Testis (tissue), 5 donors: ENCODE measurements at regions of chr11 and their contacts with region 1.

Region 1: GRCh38 chr11:19561011-19561410 is 151.6 kb upstream of the NAV2 start:
- DNase-seq: no peak
- H3K4me3 ChIP-seq: no peak overlapping the region
- H3K27ac ChIP-seq: no peak overlapping the region
- H3K4me1 ChIP-seq: no peaks in the 10 kb centered on the region
- H3K27me3 ChIP-seq: no peaks in the 10 kb centered on the region
- CTCF ChIP-seq: no peak
- POLR2A ChIP-seq: no peak

Region 2: DNA sequence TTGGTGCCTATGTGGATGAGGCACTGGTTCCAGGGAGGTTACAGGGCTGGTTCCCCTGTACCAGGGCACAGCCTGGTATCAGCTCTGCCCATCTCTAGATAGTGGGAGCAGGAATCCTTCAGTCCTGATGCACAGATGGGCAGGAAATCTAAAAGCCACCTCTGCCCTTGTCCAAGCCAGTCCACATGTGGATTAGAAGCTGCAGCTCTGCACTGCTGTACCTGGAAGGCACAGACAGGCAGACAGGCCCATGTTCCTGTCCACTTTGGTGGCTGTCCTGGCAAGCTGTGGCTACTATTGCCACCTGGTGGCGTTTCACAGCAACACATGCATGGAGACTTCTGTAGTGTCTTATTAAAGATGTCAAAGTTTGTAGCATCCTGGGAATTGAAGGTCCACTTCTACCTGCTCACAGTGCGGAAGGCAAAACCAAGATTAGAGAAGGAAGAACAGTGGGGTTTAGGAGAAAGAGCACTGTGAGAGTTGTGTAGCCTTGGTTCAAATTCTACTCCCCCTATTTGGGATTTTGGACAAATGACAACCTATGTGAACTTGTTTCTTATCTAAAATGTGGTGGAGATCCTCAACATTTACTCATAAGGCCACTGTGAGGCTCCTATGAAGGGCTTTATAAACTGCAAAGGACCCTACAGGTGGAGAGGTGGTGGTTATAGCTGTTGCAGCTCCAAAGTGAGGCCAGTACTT is 181.7 kb after region 1 on chr11:
- intact Hi-C with region 1: loop called (anchors 5 kb)
- DNase-seq: peak; percentile 88
- H3K4me3 ChIP-seq: no peak overlapping the region
- H3K27ac ChIP-seq: no peak overlapping the region
- H3K4me1 ChIP-seq: peaks cover 6% of the 10 kb centered on the region
- H3K27me3 ChIP-seq: no peaks in the 10 kb centered on the region
- CTCF ChIP-seq: peak; percentile 75 to 96 (median 93)
- POLR2A ChIP-seq: no peak